ENCODE measurements at regions of chr11 and their contacts with region 1.

Region 1: DNA sequence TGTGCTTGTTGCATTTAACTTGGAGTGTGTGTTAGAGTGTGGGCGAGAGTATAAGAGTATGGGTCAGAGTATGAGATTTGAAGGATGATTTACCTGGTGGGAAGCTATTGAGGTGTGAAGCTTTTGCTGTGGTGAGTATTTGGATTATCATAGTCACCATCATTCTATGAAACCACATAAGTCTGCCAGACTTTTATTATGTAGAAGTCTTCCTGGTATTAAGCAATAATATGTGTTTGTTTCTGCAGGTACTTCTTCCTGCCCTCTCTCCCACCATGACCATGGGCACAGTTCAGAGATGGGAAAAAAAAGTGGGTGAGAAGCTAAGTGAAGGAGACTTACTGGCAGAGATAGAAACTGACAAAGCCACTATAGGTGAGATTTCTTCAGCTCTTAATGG is 7.9 kb downstream of the DLAT start:
- DNase-seq: no peak
- ATAC-seq: no peak
- H3K4me3 ChIP-seq: no peak overlapping the region
- H3K4me3 Mint-ChIP-seq: no peak overlapping the region
- H3K27ac ChIP-seq: no peak overlapping the region
- H3K27ac Mint-ChIP-seq: no peak overlapping the region
- H3K4me1 ChIP-seq: no peaks in the 10 kb centered on the region
- H3K4me1 Mint-ChIP-seq: peaks cover 0 to 12% (median 10%) of the 10 kb centered on the region in 3 donors
- H3K27me3 ChIP-seq: no peaks in the 10 kb centered on the region
- H3K27me3 Mint-ChIP-seq: no peaks in the 10 kb centered on the region

Region 2: GRCh38 chr11:112050721-112051120 is 17.6 kb after region 1 on chr11:
- CTCF ChIA-PET with region 1: interaction called in 1 of 2 experiments, 16 read pairs
- POLR2A ChIA-PET with region 1: interaction called in 1 of 2 experiments, 20 read pairs
- DNase-seq: no peak
- ATAC-seq: no peak
- H3K4me3 ChIP-seq: no peak overlapping the region
- H3K4me3 Mint-ChIP-seq: no peak overlapping the region
- H3K27ac ChIP-seq: no peak overlapping the region
- H3K27ac Mint-ChIP-seq: peak overlapping the region in 1 of 2 donors; percentile 0
- H3K4me1 ChIP-seq: no peaks in the 10 kb centered on the region
- H3K4me1 Mint-ChIP-seq: peaks cover 11 to 28% (median 14%) of the 10 kb centered on the region in 3 donors
- H3K27me3 ChIP-seq: no peaks in the 10 kb centered on the region
- H3K27me3 Mint-ChIP-seq: no peaks in the 10 kb centered on the region

Region 3: DNA sequence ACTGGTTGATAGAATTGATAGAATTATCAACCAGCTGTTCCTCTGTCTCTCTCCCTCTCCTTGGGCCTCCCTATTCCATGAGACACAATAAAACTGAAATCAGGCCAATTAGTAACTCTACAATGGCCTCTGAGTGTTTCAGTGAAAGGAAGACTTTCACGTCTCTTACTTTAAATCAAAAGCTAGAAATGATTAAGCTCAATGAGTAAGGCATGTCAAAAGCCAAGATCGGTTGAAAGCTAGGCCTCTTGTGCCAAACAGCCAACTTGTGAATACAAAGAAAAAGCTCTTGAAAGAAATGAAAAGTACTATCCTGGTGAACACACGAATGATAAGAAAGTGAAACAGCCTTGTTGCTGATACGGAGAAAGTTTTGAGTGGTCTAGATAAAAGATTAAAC is 24.0 kb after region 1 on chr11:
- CTCF ChIA-PET with region 1: interaction called in 1 of 2 experiments, 12 read pairs
- POLR2A ChIA-PET with region 1: interaction called in 1 of 2 experiments, 20 read pairs
- DNase-seq: no peak
- ATAC-seq: no peak
- H3K4me3 ChIP-seq: no peak overlapping the region
- H3K4me3 Mint-ChIP-seq: no peak overlapping the region
- H3K27ac ChIP-seq: no peak overlapping the region
- H3K27ac Mint-ChIP-seq: no peak overlapping the region
- H3K4me1 ChIP-seq: no peaks in the 10 kb centered on the region
- H3K4me1 Mint-ChIP-seq: no peaks in the 10 kb centered on the region
- H3K27me3 ChIP-seq: no peaks in the 10 kb centered on the region
- H3K27me3 Mint-ChIP-seq: no peaks in the 10 kb centered on the region